PC-9 (cell line): ENCODE measurements at regions of chr22 and their contacts with region 1.

Region 1: DNA sequence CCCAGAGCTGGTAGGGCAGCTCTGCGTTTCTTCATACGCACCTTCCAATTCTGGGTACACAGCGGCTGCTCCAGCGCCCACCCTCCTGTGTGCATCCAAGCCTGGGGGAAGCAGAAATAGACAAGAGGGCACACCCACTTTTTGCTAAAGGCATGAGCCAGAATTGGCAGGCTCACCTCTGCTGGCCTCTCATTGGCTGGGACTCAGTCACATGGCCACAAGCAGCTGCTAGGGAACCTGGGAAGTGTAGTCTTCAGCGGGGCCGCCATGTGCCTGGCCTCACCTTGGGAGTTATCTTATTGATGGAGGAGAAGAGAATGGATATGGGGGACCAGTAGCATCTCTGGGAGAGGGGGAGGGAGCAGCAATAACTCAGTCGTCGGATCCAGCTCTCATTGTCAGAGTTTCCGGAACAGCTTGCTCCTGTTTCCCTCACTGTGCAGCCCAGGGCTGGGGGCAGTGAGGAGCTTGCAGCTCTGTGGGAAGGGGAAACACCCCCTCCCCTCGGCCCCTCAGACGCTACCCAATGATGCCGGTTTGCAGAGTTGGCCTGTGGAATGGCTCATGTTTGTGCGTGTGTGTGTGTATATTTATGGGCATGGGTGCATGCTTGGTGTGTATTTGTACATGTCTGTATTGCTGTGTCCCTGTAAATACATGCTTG is 11.8 kb upstream of the MIEF1 start:
- DNase-seq: peak; percentile 68 to 76
- H3K4me3 ChIP-seq: no peak overlapping the region
- H3K27ac ChIP-seq: no peak overlapping the region
- H3K4me1 ChIP-seq: no peaks in the 10 kb centered on the region
- H3K27me3 ChIP-seq: no peaks in the 10 kb centered on the region
- CTCF ChIP-seq: no peak

Region 2: GRCh38 chr22:38788021-38788816 is 702.0 kb before region 1 on chr22:
- CTCF ChIA-PET with region 1: interaction called, 10 read pairs
- POLR2A ChIA-PET with region 1: no interaction called
- intact Hi-C with region 1: no loop called
- DNase-seq: no peak
- H3K4me3 ChIP-seq: no peak overlapping the region
- H3K27ac ChIP-seq: no peak overlapping the region
- H3K4me1 ChIP-seq: peaks cover 19% of the 10 kb centered on the region
- H3K27me3 ChIP-seq: no peaks in the 10 kb centered on the region
- CTCF ChIP-seq: no peak

Region 3: GRCh38 chr22:39502109-39502788 is 12.0 kb after region 1 on chr22 and contains the start of gene MIEF1:
- CTCF ChIA-PET with region 1: no interaction called
- POLR2A ChIA-PET with region 1: interaction called, 12 read pairs
- intact Hi-C with region 1: no loop called
- DNase-seq: peak; percentile 94 to 97
- H3K4me3 ChIP-seq: peak within 1 kb of the TSS; percentile 92
- H3K27ac ChIP-seq: peak within 1 kb of the TSS; percentile 20; the same call in 1 of the 2 replicates
- H3K4me1 ChIP-seq: peaks cover 28% of the 10 kb centered on the region
- H3K27me3 ChIP-seq: no peaks in the 10 kb centered on the region
- CTCF ChIP-seq: no peak
- total RNA-seq, gene MIEF1: 36.9 TPM in 2 replicates